ENCODE measurements at regions of chr2 and their contacts with region 1.

Region 1: DNA sequence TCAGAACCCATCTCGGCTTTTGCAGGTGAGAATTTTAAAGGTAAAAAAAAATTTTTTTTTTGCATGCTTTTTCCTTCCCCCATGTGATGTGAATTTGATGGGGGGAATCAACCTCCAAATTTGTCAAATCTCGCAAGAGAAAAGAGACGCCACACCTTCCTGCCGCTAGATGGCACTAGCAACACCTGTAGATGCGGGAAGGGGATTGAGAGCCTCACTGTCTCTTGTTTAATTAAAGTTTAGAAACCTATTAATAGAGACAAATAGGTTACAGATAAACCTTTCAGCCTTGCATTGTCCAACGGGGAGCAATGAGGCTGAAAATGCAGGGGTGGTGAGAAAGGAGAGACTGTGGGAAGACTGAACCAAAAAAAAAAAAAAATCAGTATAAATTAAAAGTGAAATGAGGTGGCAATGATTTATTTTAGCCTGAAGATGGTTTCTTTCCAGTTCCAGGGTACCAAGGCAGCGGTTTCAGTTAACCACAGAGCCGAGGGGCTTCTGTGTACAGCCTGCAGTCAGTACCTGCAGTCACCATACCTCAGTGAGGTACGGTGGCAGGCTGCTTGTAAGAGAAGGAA is 84.6 kb downstream of the NRP2 start:
- DNase-seq: peak; percentile 43
- H3K4me3 ChIP-seq: no peak overlapping the region
- H3K27ac ChIP-seq: peak overlapping the region; percentile 25
- H3K4me1 ChIP-seq: peaks cover 44% of the 10 kb centered on the region
- H3K27me3 ChIP-seq: no peaks in the 10 kb centered on the region
- CTCF ChIP-seq: peak; percentile 92 to 95

Region 2: DNA sequence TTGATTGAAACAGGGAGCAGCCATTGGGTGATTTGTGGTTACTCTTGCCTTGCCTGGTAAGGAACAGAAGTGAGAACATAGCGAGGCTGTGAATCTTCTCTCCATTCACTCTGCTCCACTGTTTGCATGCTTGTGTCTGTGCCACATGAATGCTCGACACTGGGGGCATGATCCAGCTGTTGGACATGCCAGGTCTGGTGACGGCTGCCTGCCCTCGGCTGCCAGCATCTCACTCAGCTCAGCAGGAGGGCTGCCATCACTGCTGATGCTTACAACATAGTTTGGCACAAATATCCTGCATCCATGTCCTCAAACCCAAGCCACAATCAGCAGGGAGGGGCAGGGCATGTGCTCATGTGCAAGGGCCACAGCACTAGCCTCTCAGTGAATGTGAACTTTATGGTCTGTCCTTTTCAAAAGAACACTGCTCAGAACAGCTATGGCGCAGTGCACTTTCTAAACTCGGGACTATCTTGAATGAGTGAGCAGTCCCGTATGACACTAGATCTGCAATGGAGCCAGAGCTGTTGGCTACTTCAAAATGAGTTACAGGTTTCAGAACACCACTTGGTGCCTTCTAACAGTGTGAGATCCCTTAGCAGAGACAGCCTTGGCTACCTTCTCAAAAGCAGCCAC is 41.7 kb after region 1 on chr2:
- CTCF ChIA-PET with region 1: no interaction called
- dilution Hi-C with region 1: no loop called
- in situ Hi-C with region 1: no loop called
- intact Hi-C with region 1: loop called (anchors 1 kb)
- DNase-seq: no peak
- H3K4me3 ChIP-seq: no peak overlapping the region
- H3K27ac ChIP-seq: no peak overlapping the region
- H3K4me1 ChIP-seq: peaks cover 3% of the 10 kb centered on the region
- H3K27me3 ChIP-seq: no peaks in the 10 kb centered on the region
- CTCF ChIP-seq: no peak

Region 3: DNA sequence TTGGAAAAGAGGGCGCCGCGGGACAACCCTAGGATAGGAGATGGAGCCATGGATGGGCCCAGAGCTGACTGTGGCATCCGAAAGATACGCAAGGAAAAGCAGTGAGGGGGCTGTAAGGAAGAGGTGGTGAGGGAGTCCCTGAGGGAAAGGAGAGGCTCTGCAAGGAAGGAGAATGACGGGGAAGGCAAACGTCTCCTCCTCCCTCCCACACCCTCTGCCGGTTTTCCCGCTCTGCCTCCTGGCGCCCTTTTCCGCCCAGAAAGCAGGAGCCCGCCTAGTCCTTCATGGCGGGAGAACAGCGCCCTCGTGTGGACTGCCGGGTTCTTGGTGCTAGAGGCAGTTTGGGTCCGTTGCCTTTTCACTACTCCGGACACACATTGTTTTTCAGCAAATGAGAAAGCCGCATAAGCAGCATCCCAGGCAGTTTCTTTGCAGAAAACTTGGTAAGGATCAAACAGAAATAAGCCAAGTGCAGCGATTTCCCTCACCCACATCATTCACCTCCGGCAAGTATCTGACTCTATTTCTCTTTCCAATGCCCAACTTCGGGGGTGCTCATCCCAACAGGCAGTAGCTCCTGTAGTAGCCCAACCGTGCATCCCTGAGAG is 118.7 kb after region 1 on chr2:
- CTCF ChIA-PET with region 1: no interaction called
- dilution Hi-C with region 1: no loop called
- in situ Hi-C with region 1: no loop called
- intact Hi-C with region 1: loop called (anchors 1 kb)
- DNase-seq: peak; percentile 65
- H3K4me3 ChIP-seq: no peak overlapping the region
- H3K27ac ChIP-seq: no peak overlapping the region
- H3K4me1 ChIP-seq: peaks cover 17% of the 10 kb centered on the region
- H3K27me3 ChIP-seq: no peaks in the 10 kb centered on the region
- CTCF ChIP-seq: peak; percentile 63 to 72

Region 4: GRCh38 chr2:205947621-205948495 is 181.0 kb after region 1 on chr2:
- CTCF ChIA-PET with region 1: no interaction called
- dilution Hi-C with region 1: no loop called
- in situ Hi-C with region 1: no loop called
- intact Hi-C with region 1: loop called (anchors 1 kb)
- DNase-seq: peak; percentile 35
- H3K4me3 ChIP-seq: no peak overlapping the region
- H3K27ac ChIP-seq: no peak overlapping the region
- H3K4me1 ChIP-seq: no peaks in the 10 kb centered on the region
- H3K27me3 ChIP-seq: no peaks in the 10 kb centered on the region
- CTCF ChIP-seq: peak; percentile 92